ENCODE measurements at regions of chr2 and their contacts with region 1.

Region 1: DNA sequence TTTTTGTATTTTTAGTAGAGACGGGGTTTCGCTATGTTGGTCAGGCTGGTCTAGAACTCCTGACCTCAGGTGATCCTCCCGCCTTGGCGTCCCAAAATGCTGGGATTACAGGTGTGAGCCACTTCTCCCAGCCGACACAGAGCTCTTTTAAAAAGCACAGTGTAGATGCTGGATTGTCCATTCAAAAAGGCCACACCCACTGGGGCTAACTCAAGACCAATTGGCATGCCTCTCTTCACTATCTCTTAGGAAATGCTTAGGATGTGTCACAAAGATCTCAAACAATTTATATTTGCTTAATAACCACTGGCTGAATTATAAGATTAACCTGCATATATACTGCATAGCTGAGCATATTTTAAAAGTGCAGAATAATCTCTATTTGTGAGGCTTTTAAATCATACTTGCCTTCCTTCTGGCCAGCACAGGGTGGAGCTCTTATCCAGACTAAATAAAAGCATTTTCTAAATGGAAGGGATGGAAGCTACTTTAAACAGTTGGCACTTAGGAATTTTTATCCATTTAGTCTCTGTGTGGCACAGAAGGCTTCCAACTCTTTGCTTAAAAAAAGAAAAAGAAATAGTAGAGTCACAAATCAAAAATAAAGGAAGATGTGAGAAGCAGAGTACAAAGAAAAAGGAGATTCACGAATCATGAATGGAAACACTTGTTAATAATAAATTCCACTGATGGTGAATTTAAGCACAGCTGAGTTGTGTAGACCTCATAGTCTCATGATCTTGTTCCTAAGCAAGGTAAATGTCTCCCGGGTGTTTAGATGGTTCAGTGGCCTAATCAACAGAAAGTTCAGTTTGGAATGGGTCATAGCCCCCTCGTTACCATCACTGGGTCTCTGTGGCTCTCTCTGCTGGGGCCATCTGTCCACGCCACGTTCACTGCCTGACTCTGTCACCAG is 22.4 kb downstream of the CRYGD start:
- DNase-seq: peak; percentile 37
- H3K4me3 Mint-ChIP-seq: no peak overlapping the region
- H3K27ac Mint-ChIP-seq: no peak overlapping the region
- H3K4me1 Mint-ChIP-seq: peaks cover 4% of the 10 kb centered on the region
- H3K27me3 Mint-ChIP-seq: no peaks in the 10 kb centered on the region
- CTCF ChIP-seq: peak; percentile 30

Region 2: GRCh38 chr2:208254871-208255556 is 153.0 kb after region 1 on chr2 and contains the start of gene IDH1:
- CTCF ChIA-PET with region 1: interaction called, 46 read pairs
- POLR2A ChIA-PET with region 1: interaction called, 22 read pairs
- intact Hi-C with region 1: loop called (anchors 1 kb)
- DNase-seq: peak; percentile 97
- H3K4me3 Mint-ChIP-seq: peak within 1 kb of the TSS; percentile 83
- H3K27ac Mint-ChIP-seq: peak within 1 kb of the TSS; percentile 59
- H3K4me1 Mint-ChIP-seq: peaks cover 20% of the 10 kb centered on the region
- H3K27me3 Mint-ChIP-seq: no peaks in the 10 kb centered on the region
- CTCF ChIP-seq: peak; percentile 55
- total RNA-seq, gene IDH1: 50.2 and 122 TPM in 2 replicates

Region 3: DNA sequence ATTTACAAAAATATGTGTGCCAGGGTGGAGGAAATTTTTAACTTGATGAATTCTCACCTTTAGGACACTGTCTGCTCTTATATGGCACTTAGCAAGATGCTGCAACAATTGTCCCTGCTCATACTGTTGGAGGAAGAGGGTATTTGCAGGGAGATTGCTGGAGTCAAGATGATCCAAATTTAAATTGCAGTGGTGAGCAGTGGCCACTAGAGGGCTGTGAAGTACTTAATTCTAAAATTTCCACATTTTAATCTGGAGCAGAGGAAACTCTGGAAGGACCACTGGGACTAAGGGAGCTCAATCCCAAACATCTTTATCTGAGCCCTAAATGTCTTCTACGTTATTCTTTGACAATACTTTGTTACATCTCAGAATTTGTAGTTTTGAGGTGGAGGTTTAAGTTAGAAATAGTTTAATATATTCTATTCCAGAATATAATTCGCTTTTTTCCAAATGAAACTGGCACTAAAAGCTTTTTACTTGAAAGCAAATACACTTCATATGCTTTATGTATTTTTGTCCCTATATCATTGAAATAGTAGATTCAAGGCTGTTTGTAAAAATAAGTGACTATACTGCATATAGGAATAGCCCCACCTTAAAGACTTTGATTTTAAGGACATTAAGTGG is 271.6 kb after region 1 on chr2:
- CTCF ChIA-PET with region 1: no interaction called
- POLR2A ChIA-PET with region 1: no interaction called
- intact Hi-C with region 1: loop called (anchors 10 kb)
- DNase-seq: peak; percentile 59
- H3K4me3 Mint-ChIP-seq: no peak overlapping the region
- H3K27ac Mint-ChIP-seq: no peak overlapping the region
- H3K4me1 Mint-ChIP-seq: peaks cover 5% of the 10 kb centered on the region
- H3K27me3 Mint-ChIP-seq: no peaks in the 10 kb centered on the region
- CTCF ChIP-seq: peak; percentile 65

Measured in MCF 10A (cell line).